ENCODE measurements at regions of chr1 and their contacts with region 1.

Region 1: GRCh38 chr1:193472838-193473398 is 286.5 kb upstream of the B3GALT2 start:
- DNase-seq: no peak
- ATAC-seq: no peak
- H3K4me3 ChIP-seq: no peak overlapping the region
- H3K4me3 Mint-ChIP-seq: no peak overlapping the region
- H3K27ac ChIP-seq: no peak overlapping the region
- H3K27ac Mint-ChIP-seq: no peak overlapping the region
- H3K4me1 ChIP-seq: peaks cover 6% of the 10 kb centered on the region
- H3K4me1 Mint-ChIP-seq: peaks cover 47% of the 10 kb centered on the region
- H3K27me3 ChIP-seq: no peaks in the 10 kb centered on the region
- H3K27me3 Mint-ChIP-seq: no peaks in the 10 kb centered on the region
- CTCF ChIP-seq: no peak

Region 2: GRCh38 chr1:193456811-193457280 is 16.1 kb before region 1 on chr1:
- CTCF ChIA-PET with region 1: interaction called, 3 read pairs
- POLR2A ChIA-PET with region 1: interaction called, 55 read pairs
- intact Hi-C with region 1: loop called in 1 of 2 experiments (anchors 2 kb)
- DNase-seq: peak in 1 of 14 experiments; percentile 17
- ATAC-seq: no peak
- H3K4me3 ChIP-seq: peak overlapping the region; percentile 22
- H3K4me3 Mint-ChIP-seq: no peak overlapping the region
- H3K27ac ChIP-seq: peak overlapping the region in 1 of 2 donors; percentile 85
- H3K27ac Mint-ChIP-seq: no peak overlapping the region
- H3K4me1 ChIP-seq: peaks cover 30% of the 10 kb centered on the region
- H3K4me1 Mint-ChIP-seq: peaks cover 28% of the 10 kb centered on the region
- H3K27me3 ChIP-seq: no peaks in the 10 kb centered on the region
- H3K27me3 Mint-ChIP-seq: no peaks in the 10 kb centered on the region
- CTCF ChIP-seq: no peak

Measured in CD4-positive, alpha-beta T cell (primary cell).